Activated CD4-positive, alpha-beta T cell treated with anti-CD3 and anti-CD28 coated beads for 36 hours (primary cell): ENCODE measurements at regions of chr12 and their contacts with region 1.

Region 1: DNA sequence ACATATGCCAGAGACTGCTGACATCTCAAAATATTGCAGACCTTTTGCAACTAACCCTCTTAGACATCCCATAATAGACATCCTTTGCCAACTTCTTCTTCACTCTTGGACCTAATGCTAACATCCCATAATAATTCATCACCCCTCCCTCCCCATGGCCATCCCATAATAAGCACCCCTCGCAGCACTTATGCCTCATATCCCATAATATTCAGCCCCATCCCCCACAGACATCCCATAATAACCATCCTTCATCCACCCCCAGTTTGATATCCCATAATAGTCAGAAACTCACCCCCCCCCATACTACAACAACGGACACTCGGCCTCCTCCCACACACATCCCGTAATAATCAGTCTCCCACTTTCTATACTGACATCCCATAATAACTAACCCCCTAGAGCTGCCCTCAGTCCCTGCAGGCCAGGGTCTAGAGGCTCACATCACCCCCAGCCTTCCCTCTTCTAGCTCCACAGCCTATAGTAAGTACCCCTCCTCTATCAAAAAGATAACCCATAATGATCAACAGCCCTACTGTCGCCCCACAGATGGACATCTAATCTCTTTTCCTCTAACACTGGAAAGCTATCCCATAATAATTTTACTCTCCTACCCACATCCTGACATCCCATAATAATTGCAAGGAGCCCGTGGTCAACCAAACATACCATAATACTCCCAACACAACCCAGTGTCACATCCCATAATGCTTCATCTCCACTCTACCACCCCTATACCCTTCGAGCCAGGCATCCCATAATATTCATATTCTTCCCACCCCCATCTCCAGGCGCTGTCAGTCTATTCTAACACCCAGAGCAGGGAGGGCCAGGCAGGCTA is 792 bp upstream of the CHD4 start:
- DNase-seq: peak; percentile 84
- ATAC-seq: peak; percentile 60
- H3K4me3 Mint-ChIP-seq: no peak overlapping the region
- H3K27ac Mint-ChIP-seq: no peak overlapping the region
- H3K4me1 Mint-ChIP-seq: peaks cover 52% of the 10 kb centered on the region
- H3K27me3 Mint-ChIP-seq: no peaks in the 10 kb centered on the region

Region 2: DNA sequence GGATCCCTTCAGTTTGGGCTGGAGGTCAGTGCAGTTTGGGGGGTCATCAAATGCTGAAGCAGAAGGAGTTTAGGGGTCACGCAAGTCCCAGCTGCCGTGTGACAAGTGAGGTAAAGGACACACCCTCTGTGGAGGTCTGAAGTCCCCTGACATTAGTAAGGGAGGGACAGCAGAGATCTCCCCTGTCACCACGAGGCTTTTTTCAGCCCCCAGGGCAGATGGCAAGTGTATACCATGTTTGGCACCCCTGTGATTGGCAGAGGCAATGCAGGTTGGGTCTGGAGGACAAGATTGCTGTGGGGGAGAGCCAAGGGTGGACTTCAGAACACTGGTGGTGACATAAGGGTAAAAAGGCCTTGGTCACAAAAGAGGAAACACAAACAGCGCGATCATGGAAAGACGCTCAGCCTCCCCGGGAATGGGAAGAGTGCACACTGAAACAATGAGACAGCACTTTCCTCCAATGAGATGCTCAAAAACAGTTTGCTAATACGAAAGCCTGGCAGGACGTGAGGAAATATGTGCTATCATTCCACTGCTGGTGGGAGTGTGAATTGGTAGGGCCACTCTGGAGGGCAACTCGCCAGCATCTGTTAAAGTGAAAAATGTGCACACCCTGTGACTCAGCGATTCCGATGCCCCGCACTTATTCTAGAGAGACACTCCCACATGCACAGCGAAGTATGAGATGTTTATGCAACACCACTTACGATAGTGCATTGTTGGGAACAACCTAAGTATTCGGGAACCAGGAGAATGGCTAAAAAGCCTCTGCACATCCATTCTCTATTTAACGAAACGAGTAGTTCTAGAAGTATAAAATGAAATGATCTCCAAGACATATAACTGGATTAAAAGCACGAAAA is 177.6 kb before region 1 on chr12:
- CTCF ChIA-PET with region 1: no interaction called
- POLR2A ChIA-PET with region 1: no interaction called
- intact Hi-C with region 1: loop called in 1 of 2 experiments (anchors 1 kb)
- DNase-seq: peak; percentile 84
- ATAC-seq: no peak
- H3K4me3 Mint-ChIP-seq: peak overlapping the region; percentile 1
- H3K27ac Mint-ChIP-seq: peak overlapping the region; percentile 80
- H3K4me1 Mint-ChIP-seq: peaks cover 80% of the 10 kb centered on the region
- H3K27me3 Mint-ChIP-seq: no peaks in the 10 kb centered on the region

Region 3: GRCh38 chr12:6570264-6570887 is 37.6 kb before region 1 on chr12:
- CTCF ChIA-PET with region 1: interaction called, 12 read pairs
- POLR2A ChIA-PET with region 1: interaction called, 4 read pairs
- intact Hi-C with region 1: loop called (anchors 2 kb)
- DNase-seq: peak; percentile 76
- ATAC-seq: no peak
- H3K4me3 Mint-ChIP-seq: peak overlapping the region; percentile 89
- H3K27ac Mint-ChIP-seq: peak overlapping the region; percentile 66
- H3K4me1 Mint-ChIP-seq: peaks cover 62% of the 10 kb centered on the region
- H3K27me3 Mint-ChIP-seq: no peaks in the 10 kb centered on the region

Region 4: GRCh38 chr12:6723607-6724396 is 115.8 kb after region 1 on chr12 and contains the start of gene COPS7A:
- CTCF ChIA-PET with region 1: interaction called, 3 read pairs
- POLR2A ChIA-PET with region 1: no interaction called
- intact Hi-C with region 1: loop called in 1 of 2 experiments (anchors 1 kb)
- DNase-seq: peak; percentile 98
- ATAC-seq: peak; percentile 96
- H3K4me3 Mint-ChIP-seq: peak within 1 kb of the TSS; percentile 80
- H3K27ac Mint-ChIP-seq: peak within 1 kb of the TSS; percentile 97
- H3K4me1 Mint-ChIP-seq: peaks cover 18% of the 10 kb centered on the region
- H3K27me3 Mint-ChIP-seq: no peaks in the 10 kb centered on the region
- total RNA-seq, gene COPS7A: 38.3 to 41.6 TPM

Region 5: DNA sequence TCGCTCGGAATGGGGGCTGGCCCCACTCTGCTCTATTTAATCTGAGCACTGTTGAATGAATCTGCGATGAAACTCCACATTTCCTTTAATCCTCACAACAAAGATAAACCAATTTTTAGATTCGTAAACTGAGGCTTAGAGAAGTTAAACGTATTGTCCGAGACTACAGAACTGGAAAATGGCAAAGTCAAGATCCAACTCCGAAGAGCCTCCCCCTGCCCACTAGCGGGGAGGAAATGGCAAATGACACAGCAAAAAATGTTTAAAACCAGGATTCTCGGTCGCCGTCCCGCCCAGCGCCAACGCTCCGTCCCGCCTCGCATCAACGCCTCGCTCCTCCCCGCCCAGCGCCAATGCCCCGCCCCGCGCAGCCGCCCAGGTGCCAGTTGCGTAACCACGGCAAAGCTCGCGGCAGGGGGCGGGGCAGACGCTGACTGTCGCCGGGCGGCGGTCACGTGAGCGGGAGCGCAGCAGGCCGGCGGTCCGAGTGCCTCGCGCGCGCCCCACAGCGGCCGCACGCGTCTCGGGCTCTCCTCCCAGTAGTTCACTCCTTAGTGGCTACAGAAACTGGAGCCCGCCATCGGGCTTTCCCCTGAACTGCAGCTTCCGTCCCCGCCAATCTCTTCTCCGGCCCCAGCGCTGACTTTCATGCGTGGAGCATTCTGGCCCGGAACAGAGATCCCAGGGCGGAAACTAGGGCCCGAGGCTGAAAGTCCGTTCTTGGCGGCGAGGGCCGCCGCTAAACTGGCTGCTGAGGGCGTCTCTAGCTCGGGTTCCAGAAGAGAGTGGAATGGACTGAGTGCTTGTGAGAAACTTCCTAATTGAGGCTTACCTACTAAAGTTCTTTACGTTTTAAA is 283.0 kb after region 1 on chr12:
- CTCF ChIA-PET with region 1: no interaction called
- POLR2A ChIA-PET with region 1: no interaction called
- intact Hi-C with region 1: loop called in 1 of 2 experiments (anchors 1 kb)
- DNase-seq: peak; percentile 100
- ATAC-seq: peak; percentile 94
- H3K4me3 Mint-ChIP-seq: peak overlapping the region; percentile 87
- H3K27ac Mint-ChIP-seq: peak overlapping the region; percentile 94
- H3K4me1 Mint-ChIP-seq: peaks cover 12% of the 10 kb centered on the region
- H3K27me3 Mint-ChIP-seq: no peaks in the 10 kb centered on the region

Region 6: GRCh38 chr12:7018350-7019042 is 410.5 kb after region 1 on chr12 and contains the start of gene LPCAT3:
- CTCF ChIA-PET with region 1: no interaction called
- POLR2A ChIA-PET with region 1: no interaction called
- intact Hi-C with region 1: loop called in 1 of 2 experiments (anchors 5 kb)
- DNase-seq: peak; percentile 98
- ATAC-seq: peak; percentile 98
- H3K4me3 Mint-ChIP-seq: peak within 1 kb of the TSS; percentile 83
- H3K27ac Mint-ChIP-seq: peak within 1 kb of the TSS; percentile 80
- H3K4me1 Mint-ChIP-seq: peaks cover 29% of the 10 kb centered on the region
- H3K27me3 Mint-ChIP-seq: no peaks in the 10 kb centered on the region
- total RNA-seq, gene LPCAT3: 20.8 to 28.0 TPM